ENCODE measurements at regions of chr7 and their contacts with region 1.

Region 1: GRCh38 chr7:6026011-6026819 is 5.0 kb upstream of the ANKRD61 start:
- DNase-seq: peak; percentile 70
- CTCF ChIP-seq: peak; percentile 35

Region 2: DNA sequence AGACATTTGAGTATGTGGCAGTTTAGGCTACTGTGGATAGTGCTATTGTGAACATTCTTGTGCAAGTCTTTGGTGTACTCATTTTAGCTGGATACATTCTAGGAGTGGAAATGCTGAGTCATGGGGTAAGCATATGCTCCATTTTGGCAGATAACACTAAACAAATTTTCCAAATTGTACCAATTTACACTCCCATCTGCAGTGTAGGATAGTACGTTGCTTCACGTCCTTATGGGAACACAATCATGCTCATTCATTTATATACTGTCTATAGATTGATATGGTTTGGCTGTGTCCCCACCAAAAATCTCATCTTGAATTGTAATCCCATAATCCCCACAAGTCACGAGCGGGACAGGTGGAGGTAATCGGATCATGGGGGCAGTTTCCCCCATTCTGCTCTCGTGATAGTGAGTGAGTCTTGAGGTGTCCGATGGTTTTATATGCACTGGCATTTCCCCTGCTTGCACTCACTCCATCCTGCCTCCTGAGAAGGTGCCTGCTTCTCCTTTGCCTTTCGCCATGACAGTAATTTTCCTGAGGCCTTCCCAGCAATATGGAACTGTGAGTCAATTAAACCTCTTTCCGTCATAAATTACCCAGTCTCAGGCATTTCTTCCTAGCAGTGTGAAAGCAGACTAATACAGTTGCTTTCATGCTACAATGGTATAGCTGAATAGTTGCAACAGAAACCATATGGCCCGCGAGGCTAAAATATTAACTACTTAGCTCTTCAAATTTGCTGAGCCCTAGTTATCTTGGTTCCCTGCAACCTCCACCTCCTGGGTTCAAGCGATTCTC is 270.3 kb before region 1 on chr7:
- CTCF ChIA-PET with region 1: no interaction called
- POLR2A ChIA-PET with region 1: no interaction called
- DNase-seq: no peak
- CTCF ChIP-seq: no peak

Region 3: GRCh38 chr7:6008668-6009611 is 17.3 kb before region 1 on chr7 and contains the starts of genes AIMP2 and PMS2:
- CTCF ChIA-PET with region 1: interaction called, 10 read pairs
- POLR2A ChIA-PET with region 1: interaction called, 3 read pairs
- DNase-seq: peak; percentile 94
- CTCF ChIP-seq: peak; percentile 10

Region 4: GRCh38 chr7:6015917-6016652 is 10.1 kb before region 1 on chr7:
- CTCF ChIA-PET with region 1: interaction called, 10 read pairs
- POLR2A ChIA-PET with region 1: interaction called, 3 read pairs
- DNase-seq: no peak
- CTCF ChIP-seq: no peak

Region 5: DNA sequence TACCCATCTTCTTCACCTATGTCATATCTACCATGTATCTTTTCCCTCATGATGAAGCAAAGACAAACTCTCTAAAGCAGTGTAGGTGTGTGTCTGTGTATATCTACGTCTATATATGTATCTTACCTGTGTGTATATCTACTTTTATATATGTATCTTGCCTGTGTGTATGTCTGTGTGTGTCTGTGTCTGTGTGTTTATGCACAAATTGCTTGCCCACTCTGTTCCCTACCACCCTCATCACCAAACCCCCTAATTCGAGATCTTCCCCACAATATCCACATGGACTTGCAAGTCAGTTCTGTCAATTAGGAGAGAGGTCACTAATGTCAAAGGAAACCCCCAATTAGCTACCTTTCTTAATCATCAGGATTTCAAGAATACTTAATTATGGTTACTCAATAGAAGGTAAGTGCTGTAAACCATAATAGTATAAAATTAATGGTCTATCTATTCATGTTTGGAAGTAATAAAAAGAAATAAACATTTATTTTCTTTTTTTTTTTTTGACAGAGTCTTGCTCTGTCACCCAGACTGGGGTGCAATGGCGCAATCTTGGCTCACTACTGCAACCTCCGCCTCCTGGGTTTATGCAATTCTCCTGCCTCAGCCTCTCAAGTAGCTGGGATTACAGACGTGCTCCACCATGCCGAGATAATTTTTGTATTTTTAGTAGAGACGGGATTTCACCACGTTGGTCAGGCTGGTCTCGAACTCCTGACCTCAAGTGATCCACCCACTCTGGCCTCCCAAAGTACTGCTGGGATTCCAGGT is 48.6 kb after region 1 on chr7:
- CTCF ChIA-PET with region 1: no interaction called
- POLR2A ChIA-PET with region 1: no interaction called
- DNase-seq: no peak
- CTCF ChIP-seq: no peak

Measured in GM10248 (cell line).